HCT116 (cell line): ENCODE measurements at regions of chr11 and their contacts with region 1.

Region 1: DNA sequence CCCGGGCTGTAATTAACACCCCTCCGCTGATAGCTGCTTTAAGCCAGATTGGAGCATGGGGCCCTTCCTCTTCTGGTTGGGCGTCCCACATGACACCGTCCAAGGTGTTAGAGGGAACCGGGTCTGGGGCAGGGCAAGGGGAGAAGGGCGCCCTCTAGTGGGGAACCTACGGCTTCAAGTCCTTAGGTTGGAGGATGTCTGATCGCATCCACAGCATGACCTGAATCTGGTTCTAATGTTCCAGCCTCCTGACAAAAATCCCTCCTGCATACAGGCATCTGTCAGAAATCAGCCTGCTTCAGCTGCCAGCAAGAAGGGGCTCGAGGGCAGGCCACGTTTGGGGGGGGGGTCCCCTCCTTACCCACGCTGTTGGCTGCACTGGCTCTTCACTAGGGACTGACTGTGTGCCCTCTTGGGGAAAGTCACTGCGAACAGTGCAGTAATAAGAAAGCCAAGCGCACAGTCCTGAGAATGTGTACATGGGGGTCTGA is 94.2 kb upstream of the TBCEL start:
- DNase-seq: peak; percentile 61
- ATAC-seq: peak; percentile 97
- H3K4me3 ChIP-seq: no peak overlapping the region
- H3K27ac ChIP-seq: no peak overlapping the region
- H3K4me1 ChIP-seq: peaks cover 2 to 8% of the 10 kb centered on the region in 2 experiments; a peak in 1 of 4 replicates
- H3K27me3 ChIP-seq: no peaks in the 10 kb centered on the region
- CTCF ChIP-seq: peak; percentile 69 to 87 (median 87)
- POLR2A ChIP-seq: no peak
- RAD21 ChIP-seq: peak; percentile 66

Region 2: GRCh38 chr11:120424185-120424969 is 505.3 kb before region 1 on chr11:
- CTCF ChIA-PET with region 1: no interaction called
- POLR2A ChIA-PET with region 1: no interaction called
- RAD21 ChIA-PET with region 1: no interaction called
- intact Hi-C with region 1: no loop called
- DNase-seq: no peak
- ATAC-seq: no peak
- H3K4me3 ChIP-seq: no peak overlapping the region
- H3K27ac ChIP-seq: no peak overlapping the region
- H3K4me1 ChIP-seq: peaks cover 0 to 4% of the 10 kb centered on the region in 2 experiments; a peak in 2 of 4 replicates
- H3K27me3 ChIP-seq: no peaks in the 10 kb centered on the region
- CTCF ChIP-seq: no peak
- POLR2A ChIP-seq: no peak
- RAD21 ChIP-seq: no peak

Region 3: GRCh38 chr11:120912504-120912903 is 17.2 kb before region 1 on chr11:
- CTCF ChIA-PET with region 1: interaction called, 13 read pairs
- POLR2A ChIA-PET with region 1: no interaction called
- RAD21 ChIA-PET with region 1: interaction called in 1 of 2 experiments, 7 read pairs
- intact Hi-C with region 1: no loop called
- DNase-seq: peak; percentile 53
- ATAC-seq: peak; percentile 89
- H3K4me3 ChIP-seq: no peak overlapping the region
- H3K27ac ChIP-seq: no peak overlapping the region
- H3K4me1 ChIP-seq: peaks cover 5 to 8% of the 10 kb centered on the region in 2 experiments; a peak in 2 of 4 replicates
- H3K27me3 ChIP-seq: peaks cover 13% of the 10 kb centered on the region
- CTCF ChIP-seq: peak; percentile 31 to 63 (median 58); a peak in 5 of 6 replicates
- POLR2A ChIP-seq: no peak
- RAD21 ChIP-seq: peak; percentile 33; the same call in 1 of the 2 replicates

Region 4: GRCh38 chr11:120917559-120918239 is 12.0 kb before region 1 on chr11:
- CTCF ChIA-PET with region 1: interaction called, 13 read pairs
- POLR2A ChIA-PET with region 1: interaction called, 4 read pairs
- RAD21 ChIA-PET with region 1: interaction called in 1 of 2 experiments, 7 read pairs
- intact Hi-C with region 1: no loop called
- DNase-seq: no peak
- ATAC-seq: no peak
- H3K4me3 ChIP-seq: no peak overlapping the region
- H3K27ac ChIP-seq: no peak overlapping the region
- H3K4me1 ChIP-seq: no peaks in the 10 kb centered on the region
- H3K27me3 ChIP-seq: peaks cover 17% of the 10 kb centered on the region
- CTCF ChIP-seq: no peak
- POLR2A ChIP-seq: no peak
- RAD21 ChIP-seq: no peak

Region 5: DNA sequence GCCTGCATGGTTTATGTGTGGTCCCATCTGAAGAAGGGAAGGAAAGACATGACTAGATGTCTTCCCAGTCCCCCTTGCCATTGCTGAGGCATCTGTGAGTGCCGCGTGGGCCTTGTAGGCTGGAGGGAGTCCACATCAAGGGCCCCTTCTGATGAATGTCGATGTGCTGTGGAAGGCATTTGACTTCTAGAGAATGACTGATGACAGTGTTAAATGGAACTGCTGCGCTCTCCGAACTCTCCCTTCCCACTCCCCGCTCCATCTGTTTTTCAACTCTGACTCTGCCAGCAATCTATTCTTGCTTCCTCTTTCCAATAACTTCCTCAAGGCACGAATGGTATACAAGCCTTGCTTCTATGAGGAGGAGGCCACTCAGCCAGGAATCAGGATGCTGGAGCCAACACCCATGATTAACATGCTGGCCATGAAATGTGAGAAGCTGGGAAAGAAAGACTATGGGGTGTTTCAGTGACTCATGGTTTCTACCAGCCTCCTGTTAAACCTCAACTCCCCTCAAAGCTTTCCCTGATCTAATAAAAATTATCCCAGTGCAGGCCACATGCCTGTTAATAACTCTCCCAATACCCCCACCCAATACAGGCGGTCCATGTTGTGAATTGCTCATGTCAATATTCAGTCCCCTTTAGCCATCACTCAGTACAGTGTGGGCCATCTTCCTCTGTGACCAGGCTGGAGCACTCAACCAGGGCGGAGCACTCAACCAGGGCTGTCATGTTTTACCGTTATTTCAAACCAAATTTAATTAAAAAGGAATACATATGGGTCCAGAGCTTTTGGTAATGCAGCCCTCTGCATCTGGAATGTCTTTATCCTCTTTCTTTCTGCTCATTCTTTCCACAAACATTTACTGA is 47.8 kb after region 1 on chr11:
- CTCF ChIA-PET with region 1: no interaction called
- POLR2A ChIA-PET with region 1: no interaction called
- RAD21 ChIA-PET with region 1: no interaction called
- intact Hi-C with region 1: no loop called
- DNase-seq: no peak
- ATAC-seq: no peak
- H3K4me3 ChIP-seq: no peak overlapping the region
- H3K27ac ChIP-seq: no peak overlapping the region
- H3K4me1 ChIP-seq: peaks cover 0 to 4% of the 10 kb centered on the region in 2 experiments; a peak in 1 of 4 replicates
- H3K27me3 ChIP-seq: peaks cover 50% of the 10 kb centered on the region
- CTCF ChIP-seq: no peak
- POLR2A ChIP-seq: no peak
- RAD21 ChIP-seq: no peak

Region 6: GRCh38 chr11:121112498-121113455 is 183.1 kb after region 1 on chr11:
- CTCF ChIA-PET with region 1: no interaction called
- POLR2A ChIA-PET with region 1: no interaction called
- RAD21 ChIA-PET with region 1: no interaction called
- intact Hi-C with region 1: no loop called
- DNase-seq: peak; percentile 35
- ATAC-seq: peak; percentile 98
- H3K4me3 ChIP-seq: no peak overlapping the region
- H3K27ac ChIP-seq: no peak overlapping the region
- H3K4me1 ChIP-seq: 0 out of 4 replicates have a peak, but pooled peaks cover 0 to 3% of the 10 kb centered on the region in 2 experiments
- H3K27me3 ChIP-seq: peaks cover 8% of the 10 kb centered on the region; the same call in 1 of the 2 replicates
- CTCF ChIP-seq: peak; percentile 43 to 70 (median 67)
- POLR2A ChIP-seq: no peak
- RAD21 ChIP-seq: peak; percentile 81

Region 7: DNA sequence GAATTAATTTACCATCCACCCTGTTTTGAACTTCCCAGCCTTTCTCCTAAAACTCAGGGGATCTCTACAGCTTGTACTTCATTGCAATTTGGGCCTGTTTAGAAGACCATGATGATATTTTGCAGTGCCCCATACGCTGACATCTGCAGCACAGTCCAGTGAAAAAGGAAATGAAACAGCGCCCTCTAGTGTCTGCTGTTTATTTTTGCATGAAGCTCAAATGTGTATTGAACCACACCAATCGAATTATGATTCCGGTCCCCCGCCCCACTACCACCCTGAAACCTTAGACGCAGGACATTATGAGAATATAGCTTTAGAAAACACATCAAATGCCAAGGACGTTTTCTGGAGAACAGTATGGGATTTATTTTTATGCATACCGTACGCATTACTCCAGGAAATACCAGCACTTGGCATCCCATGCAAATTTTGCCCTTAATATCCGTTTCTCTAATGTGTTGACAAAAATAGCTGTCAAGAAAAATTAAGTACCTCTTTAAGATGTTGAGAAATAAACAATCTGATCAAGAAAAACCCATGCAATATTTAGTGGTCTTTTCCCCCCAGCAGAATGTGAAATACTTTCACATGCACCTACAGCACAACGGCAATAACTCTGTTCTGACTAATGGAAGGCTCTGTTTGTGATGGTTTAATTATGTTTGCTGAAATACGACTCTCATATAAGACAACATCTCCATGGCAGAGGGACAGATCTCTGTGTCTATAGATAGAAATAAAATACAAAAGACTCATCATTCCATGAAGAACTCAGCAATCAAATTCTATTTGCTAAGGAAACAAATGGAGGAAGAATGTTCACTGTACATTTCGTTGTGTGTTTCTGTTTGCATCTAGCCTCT is 265.3 kb after region 1 on chr11:
- CTCF ChIA-PET with region 1: interaction called, 8 read pairs
- POLR2A ChIA-PET with region 1: no interaction called
- RAD21 ChIA-PET with region 1: no interaction called
- intact Hi-C with region 1: loop called (anchors 2 kb)
- DNase-seq: peak; percentile 63
- ATAC-seq: peak; percentile 99
- H3K4me3 ChIP-seq: peak overlapping the region; percentile 1 to 27; a peak in 2 of 4 replicates
- H3K27ac ChIP-seq: no peak overlapping the region
- H3K4me1 ChIP-seq: peaks cover 0 to 7% of the 10 kb centered on the region in 2 experiments; a peak in 2 of 4 replicates
- H3K27me3 ChIP-seq: no peaks in the 10 kb centered on the region; the same call in 1 of the 2 replicates
- CTCF ChIP-seq: peak; percentile 71 to 84 (median 76)
- POLR2A ChIP-seq: no peak
- RAD21 ChIP-seq: peak; percentile 91

Region 8: DNA sequence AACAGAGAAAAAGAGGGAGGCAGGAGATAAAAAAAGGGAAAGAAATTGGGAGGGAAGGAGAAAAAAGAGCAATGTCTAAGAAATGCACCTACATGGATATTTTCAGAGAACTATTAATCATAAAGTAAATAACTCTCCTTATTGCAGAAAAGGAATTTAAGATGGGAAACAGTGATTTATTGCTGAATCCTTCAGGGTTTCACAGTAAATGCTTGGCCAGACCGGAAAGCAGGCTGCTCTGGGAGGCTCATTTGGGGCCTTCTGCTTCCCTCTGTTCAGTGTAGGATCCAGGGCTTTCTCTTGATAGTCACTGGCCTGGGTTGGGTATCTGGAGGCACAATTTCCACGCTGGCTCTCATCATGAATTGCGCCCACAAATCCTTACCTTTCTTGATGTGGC is 847.3 kb after region 1 on chr11:
- CTCF ChIA-PET with region 1: no interaction called
- POLR2A ChIA-PET with region 1: no interaction called
- RAD21 ChIA-PET with region 1: no interaction called
- intact Hi-C with region 1: no loop called
- DNase-seq: no peak
- ATAC-seq: no peak
- H3K4me3 ChIP-seq: no peak overlapping the region
- H3K27ac ChIP-seq: no peak overlapping the region
- H3K4me1 ChIP-seq: no peaks in the 10 kb centered on the region
- H3K27me3 ChIP-seq: no peaks in the 10 kb centered on the region
- CTCF ChIP-seq: no peak
- POLR2A ChIP-seq: no peak
- RAD21 ChIP-seq: no peak